ENCODE measurements at regions of chr13 and their contacts with region 1.

Region 1: GRCh38 chr13:102091231-102091630 is 310.6 kb downstream of the FGF14 start:
- DNase-seq: no peak
- ATAC-seq: no peak
- H3K4me3 ChIP-seq: no peak overlapping the region
- H3K27ac ChIP-seq: no peak overlapping the region
- H3K4me1 ChIP-seq: peaks cover 8 to 10% of the 10 kb centered on the region in 2 donors
- H3K27me3 ChIP-seq: no peaks in the 10 kb centered on the region
- CTCF ChIP-seq: no peak
- POLR2A ChIP-seq: no peak

Region 2: GRCh38 chr13:102012299-102013293 is 78.6 kb before region 1 on chr13:
- in situ Hi-C with region 1: no loop called
- intact Hi-C with region 1: loop called (anchors 5 kb)
- DNase-seq: peak; percentile 19 to 59
- ATAC-seq: peak; percentile 95 to 98
- H3K4me3 ChIP-seq: peak overlapping the region in 1 of 4 donors; percentile 2
- H3K27ac ChIP-seq: peak overlapping the region; percentile 75 to 84 (median 78)
- H3K4me1 ChIP-seq: peaks cover 20 to 29% of the 10 kb centered on the region in 2 donors
- H3K27me3 ChIP-seq: no peaks in the 10 kb centered on the region
- CTCF ChIP-seq: no peak
- POLR2A ChIP-seq: peak in 1 of 2 donors; percentile 48

Region 3: DNA sequence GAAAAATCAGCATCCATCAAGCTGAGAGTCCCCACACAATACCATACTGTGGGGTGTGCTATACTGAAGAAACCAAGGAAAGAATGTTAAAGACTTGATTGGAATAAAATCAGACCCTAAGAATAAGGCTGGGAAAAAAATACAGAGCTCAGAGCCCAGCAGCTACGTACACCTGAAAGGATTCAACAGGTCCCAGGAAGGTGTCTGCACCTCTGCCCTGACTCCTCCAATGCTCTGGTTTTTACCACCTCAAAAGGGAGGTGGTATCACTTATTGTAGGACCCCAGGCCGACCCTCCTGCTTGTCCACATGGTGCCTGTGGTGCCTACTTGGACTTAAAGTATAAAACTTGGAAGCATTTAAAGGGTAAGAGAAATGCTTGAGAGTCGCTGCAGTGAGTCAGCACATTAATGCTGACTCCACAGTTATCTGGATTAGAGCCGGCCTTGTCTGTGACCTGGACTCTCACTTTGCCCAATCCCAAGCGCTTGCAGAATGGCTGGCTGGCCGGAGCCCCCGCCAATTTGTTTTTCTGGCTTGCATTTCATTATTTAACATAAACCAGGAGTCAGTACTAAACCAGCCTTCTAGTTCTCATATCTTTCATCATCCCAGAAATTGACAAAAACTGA is 200.5 kb after region 1 on chr13:
- in situ Hi-C with region 1: no loop called
- intact Hi-C with region 1: no loop called
- DNase-seq: no peak
- ATAC-seq: no peak
- H3K4me3 ChIP-seq: no peak overlapping the region
- H3K27ac ChIP-seq: no peak overlapping the region
- H3K4me1 ChIP-seq: no peaks in the 10 kb centered on the region
- H3K27me3 ChIP-seq: no peaks in the 10 kb centered on the region
- CTCF ChIP-seq: no peak
- POLR2A ChIP-seq: no peak

Measured in gastrocnemius medialis (tissue), 4 donors.